ENCODE measurements at regions of chr1 and their contacts with region 1.

Region 1: GRCh38 chr1:90591970-90592356 is 125.1 kb downstream of the BARHL2 start:
- DNase-seq: no peak
- H3K4me3 ChIP-seq: no peak overlapping the region
- H3K27ac ChIP-seq: no peak overlapping the region
- H3K4me1 ChIP-seq: no peaks in the 10 kb centered on the region
- H3K27me3 ChIP-seq: no peaks in the 10 kb centered on the region
- CTCF ChIP-seq: no peak
- POLR2A ChIP-seq: no peak

Region 2: GRCh38 chr1:90640325-90640724 is 48.4 kb after region 1 on chr1:
- intact Hi-C with region 1: loop called (anchors 2 kb)
- DNase-seq: no peak
- H3K4me3 ChIP-seq: no peak overlapping the region
- H3K27ac ChIP-seq: no peak overlapping the region
- H3K4me1 ChIP-seq: no peaks in the 10 kb centered on the region
- H3K27me3 ChIP-seq: no peaks in the 10 kb centered on the region
- CTCF ChIP-seq: no peak
- POLR2A ChIP-seq: no peak

Measured in breast epithelium (tissue), 4 donors.